Mammary epithelial cell (primary cell): ENCODE measurements at regions of chr5 and their contacts with region 1.

Region 1: GRCh38 chr5:138503487-138504270 is 38.4 kb downstream of the EGR1 start:
- DNase-seq: peak; percentile 52
- H3K4me3 ChIP-seq: no peak overlapping the region
- H3K27ac ChIP-seq: no peak overlapping the region
- H3K4me1 ChIP-seq: peaks cover 45% of the 10 kb centered on the region
- H3K27me3 ChIP-seq: no peaks in the 10 kb centered on the region
- CTCF ChIP-seq: peak; percentile 84 to 91

Region 2: DNA sequence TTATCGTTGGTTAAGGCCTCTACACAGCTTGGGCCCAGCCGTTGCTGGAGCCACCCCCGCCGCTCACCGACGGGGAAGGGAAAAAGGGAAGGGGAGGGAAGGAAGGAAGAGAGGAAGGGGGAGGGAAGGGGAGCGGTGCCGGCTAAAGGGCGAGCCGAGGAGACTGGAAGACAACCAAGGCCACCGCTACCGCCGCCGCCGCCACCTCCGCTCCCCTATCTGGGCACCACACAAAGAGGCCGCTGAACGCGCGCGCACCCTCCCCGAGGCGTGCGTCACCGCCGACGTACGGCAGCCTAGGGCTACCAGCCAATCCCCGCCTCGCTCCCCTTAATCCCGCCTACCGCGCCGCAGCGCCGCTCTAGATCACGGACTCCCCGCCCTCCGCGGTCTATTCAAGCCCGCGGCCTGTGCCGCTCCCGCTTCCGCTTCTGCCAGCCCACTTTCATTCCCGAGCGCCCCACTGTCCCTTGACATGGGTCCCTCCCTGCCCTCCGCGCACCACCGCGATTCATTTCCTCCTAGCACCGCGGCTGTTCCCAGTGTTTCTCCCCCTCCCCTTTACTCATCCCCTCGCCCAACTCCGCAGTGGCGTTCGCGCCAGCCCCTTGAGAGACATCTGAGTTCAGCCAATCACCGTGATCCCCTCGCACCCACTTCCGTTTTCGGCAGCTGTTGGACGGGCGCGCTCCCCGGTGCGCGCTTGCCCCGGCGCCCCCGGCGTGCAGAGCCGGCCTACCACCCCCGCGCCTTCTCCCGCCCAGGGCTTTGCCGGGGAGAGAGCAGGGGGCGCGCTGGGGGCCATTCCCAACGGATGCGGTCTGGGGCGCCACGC is 749.3 kb before region 1 on chr5 and contains the start of gene HNRNPA0:
- CTCF ChIA-PET with region 1: no interaction called
- dilution Hi-C with region 1: no loop called
- in situ Hi-C with region 1: no loop called
- intact Hi-C with region 1: no loop called
- DNase-seq: peak; percentile 95
- H3K4me3 ChIP-seq: peak within 1 kb of the TSS; percentile 62 to 92 (median 86)
- H3K27ac ChIP-seq: peak within 1 kb of the TSS; percentile 97
- H3K4me1 ChIP-seq: peaks cover 15% of the 10 kb centered on the region
- H3K27me3 ChIP-seq: no peaks in the 10 kb centered on the region
- CTCF ChIP-seq: no peak
- total RNA-seq, gene HNRNPA0: 15.8 to 22.2 TPM

Region 3: GRCh38 chr5:138449501-138450239 is 54.0 kb before region 1 on chr5:
- CTCF ChIA-PET with region 1: interaction called, 6 read pairs
- dilution Hi-C with region 1: no loop called
- in situ Hi-C with region 1: loop called in 1 of 2 experiments (anchors 10 kb)
- intact Hi-C with region 1: loop called (anchors 1 kb)
- DNase-seq: peak; percentile 76
- H3K4me3 ChIP-seq: no peak overlapping the region
- H3K27ac ChIP-seq: no peak overlapping the region
- H3K4me1 ChIP-seq: peaks cover 6% of the 10 kb centered on the region
- H3K27me3 ChIP-seq: no peaks in the 10 kb centered on the region
- CTCF ChIP-seq: peak; percentile 91 to 95

Region 4: GRCh38 chr5:138464008-138464387 is 39.7 kb before region 1 on chr5:
- CTCF ChIA-PET with region 1: interaction called, 7 read pairs
- dilution Hi-C with region 1: loop called (anchors 5 kb)
- in situ Hi-C with region 1: loop called (anchors 5 kb)
- intact Hi-C with region 1: loop called (anchors 1 kb)
- DNase-seq: peak; percentile 94
- H3K4me3 ChIP-seq: peak overlapping the region; percentile 66 to 90 (median 83)
- H3K27ac ChIP-seq: peak overlapping the region; percentile 84
- H3K4me1 ChIP-seq: peaks cover 45% of the 10 kb centered on the region
- H3K27me3 ChIP-seq: no peaks in the 10 kb centered on the region
- CTCF ChIP-seq: peak; percentile 58 to 71

Region 5: DNA sequence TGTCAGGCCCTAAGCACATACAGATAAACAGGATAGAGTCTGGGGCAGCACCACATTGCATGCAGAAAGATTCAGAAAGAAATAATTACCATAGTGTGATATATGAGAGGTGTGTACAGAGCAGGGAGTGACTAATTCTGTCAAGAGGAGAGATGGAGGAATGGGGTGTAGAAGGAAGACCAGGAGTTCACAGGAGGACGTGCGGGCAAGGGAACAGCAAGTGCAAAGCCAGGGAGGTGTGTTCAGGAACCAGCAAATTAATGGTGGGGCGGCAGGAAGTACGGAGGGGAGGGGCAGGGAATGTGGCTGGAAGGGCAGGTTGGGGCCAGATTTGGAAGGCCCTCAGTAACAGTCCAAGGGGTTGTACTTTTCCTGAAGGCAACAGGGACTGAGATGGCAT is 21.0 kb before region 1 on chr5:
- CTCF ChIA-PET with region 1: interaction called, 3 read pairs
- dilution Hi-C with region 1: no loop called
- in situ Hi-C with region 1: no loop called
- intact Hi-C with region 1: loop called (anchors 1 kb)
- DNase-seq: no peak
- H3K4me3 ChIP-seq: no peak overlapping the region
- H3K27ac ChIP-seq: no peak overlapping the region
- H3K4me1 ChIP-seq: peaks cover 15% of the 10 kb centered on the region
- H3K27me3 ChIP-seq: no peaks in the 10 kb centered on the region
- CTCF ChIP-seq: no peak

Region 6: GRCh38 chr5:138542956-138543729 is 39.5 kb after region 1 on chr5 and contains the start of gene ETF1:
- CTCF ChIA-PET with region 1: interaction called, 3 read pairs
- dilution Hi-C with region 1: no loop called
- in situ Hi-C with region 1: no loop called
- intact Hi-C with region 1: loop called (anchors 5 kb)
- DNase-seq: peak; percentile 100
- H3K4me3 ChIP-seq: peak within 1 kb of the TSS; percentile 80 to 96 (median 82)
- H3K27ac ChIP-seq: peak within 1 kb of the TSS; percentile 100
- H3K4me1 ChIP-seq: peaks cover 36% of the 10 kb centered on the region
- H3K27me3 ChIP-seq: no peaks in the 10 kb centered on the region
- CTCF ChIP-seq: no peak
- total RNA-seq, gene ETF1: 167 to 200 TPM